ENCODE measurements at regions of chr12 and their contacts with region 1.

Region 1: GRCh38 chr12:110431957-110432587 is 18.1 kb downstream of the ARPC3 start:
- DNase-seq: no peak
- ATAC-seq: no peak
- H3K4me3 ChIP-seq: no peak overlapping the region
- H3K27ac ChIP-seq: no peak overlapping the region
- H3K4me1 ChIP-seq: 0 out of 2 replicates have a peak, but pooled peaks cover 2% of the 10 kb centered on the region
- H3K27me3 ChIP-seq: no peaks in the 10 kb centered on the region
- CTCF ChIP-seq: no peak
- POLR2A ChIP-seq: no peak
- RAD21 ChIP-seq: no peak

Region 2: GRCh38 chr12:110048242-110049027 is 383.6 kb before region 1 on chr12 and contains the start of gene C12orf76:
- CTCF ChIA-PET with region 1: interaction called, 3 read pairs
- POLR2A ChIA-PET with region 1: no interaction called
- dilution Hi-C with region 1: no loop called
- in situ Hi-C with region 1: no loop called
- intact Hi-C with region 1: loop called (anchors 5 kb)
- DNase-seq: peak; percentile 96
- ATAC-seq: peak; percentile 99
- H3K4me3 ChIP-seq: peak within 1 kb of the TSS; percentile 73
- H3K27ac ChIP-seq: peak within 1 kb of the TSS; percentile 66
- H3K4me1 ChIP-seq: peaks cover 5% of the 10 kb centered on the region; the same call in 1 of the 2 replicates
- H3K27me3 ChIP-seq: no peaks in the 10 kb centered on the region
- CTCF ChIP-seq: no peak
- POLR2A ChIP-seq: 0 out of 2 replicates have a peak, but pooled peaks have one; percentile 21
- RAD21 ChIP-seq: no peak; the same call in 1 of the 2 replicates
- total RNA-seq, gene C12orf76: 5.0 and 6.7 TPM in 2 replicates

Region 3: GRCh38 chr12:110176745-110177144 is 255.3 kb before region 1 on chr12:
- CTCF ChIA-PET with region 1: interaction called, 10 read pairs
- POLR2A ChIA-PET with region 1: no interaction called
- dilution Hi-C with region 1: no loop called
- in situ Hi-C with region 1: no loop called
- intact Hi-C with region 1: no loop called
- DNase-seq: peak; percentile 59
- ATAC-seq: no peak
- H3K4me3 ChIP-seq: no peak overlapping the region
- H3K27ac ChIP-seq: no peak overlapping the region
- H3K4me1 ChIP-seq: peaks cover 4% of the 10 kb centered on the region
- H3K27me3 ChIP-seq: no peaks in the 10 kb centered on the region
- CTCF ChIP-seq: no peak
- POLR2A ChIP-seq: no peak
- RAD21 ChIP-seq: no peak

Region 4: DNA sequence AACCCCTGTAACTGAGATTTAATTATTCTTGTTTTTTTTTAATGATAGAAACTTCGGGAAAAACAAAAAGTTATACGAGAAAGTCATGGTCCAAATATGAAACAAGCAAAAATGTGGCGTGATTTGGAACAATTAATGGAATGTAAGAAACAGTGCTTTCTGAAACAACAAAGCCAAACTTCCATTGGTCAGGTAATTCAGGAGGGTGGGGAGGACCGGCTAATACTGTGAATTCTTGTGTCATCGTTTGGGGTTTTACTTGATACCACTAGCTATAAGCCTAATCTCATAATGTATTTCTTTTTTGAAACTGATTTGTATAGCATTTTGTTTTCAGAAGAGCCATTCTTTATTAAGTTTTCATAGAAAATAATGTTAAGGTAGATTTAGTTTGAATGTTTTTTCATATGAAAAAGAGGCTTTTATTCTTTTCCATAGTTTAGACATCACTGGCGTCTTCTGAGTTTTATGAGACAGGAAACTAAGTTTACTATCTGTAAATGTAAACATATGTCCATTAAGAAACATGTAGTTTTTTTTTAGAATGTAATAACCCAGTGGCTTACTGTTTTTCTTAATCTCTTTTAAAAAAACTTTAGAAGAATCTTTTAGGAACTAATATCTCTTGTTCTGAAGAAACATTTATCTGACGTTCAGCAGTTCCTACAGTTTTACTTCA is 213.9 kb before region 1 on chr12:
- CTCF ChIA-PET with region 1: no interaction called
- POLR2A ChIA-PET with region 1: no interaction called
- dilution Hi-C with region 1: no loop called
- in situ Hi-C with region 1: no loop called
- intact Hi-C with region 1: no loop called
- DNase-seq: no peak
- ATAC-seq: no peak
- H3K4me3 ChIP-seq: no peak overlapping the region
- H3K27ac ChIP-seq: peak overlapping the region; percentile 26; the same call in 1 of the 2 replicates
- H3K4me1 ChIP-seq: peaks cover 3% of the 10 kb centered on the region; the same call in 1 of the 2 replicates
- H3K27me3 ChIP-seq: no peaks in the 10 kb centered on the region
- CTCF ChIP-seq: no peak
- POLR2A ChIP-seq: no peak
- RAD21 ChIP-seq: no peak

Region 5: DNA sequence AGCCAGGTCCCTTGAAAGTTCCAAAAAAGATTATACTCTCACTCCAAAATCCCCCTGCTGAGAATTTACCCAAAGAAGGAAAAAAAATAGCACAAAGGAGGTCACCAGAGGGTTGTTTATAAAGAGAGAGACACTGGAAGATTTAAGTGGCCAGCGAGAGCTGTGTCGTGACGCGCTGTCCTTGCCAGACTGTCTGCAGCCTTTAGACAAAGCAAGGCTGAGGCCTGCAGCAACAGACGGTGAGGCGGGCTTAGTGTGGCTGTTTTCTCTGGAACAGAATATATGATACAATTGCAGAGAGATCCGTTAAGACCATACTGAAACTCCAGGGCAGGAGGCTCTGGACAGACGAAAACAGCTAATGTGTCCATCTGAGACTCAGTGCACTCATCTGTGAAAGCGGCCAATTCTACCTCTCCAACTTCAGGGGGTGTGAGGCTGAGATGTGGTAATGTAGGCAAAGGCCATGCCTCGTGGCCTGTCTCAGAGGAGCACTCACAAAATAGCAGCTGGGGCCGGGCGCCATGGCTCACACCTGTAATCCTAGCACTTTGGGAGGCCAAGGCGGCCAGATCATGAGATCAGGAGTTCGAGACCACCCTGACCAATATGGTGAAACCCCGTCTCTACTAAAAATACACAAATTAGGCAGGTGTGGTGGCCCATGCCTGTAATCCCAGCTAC is 64.7 kb before region 1 on chr12:
- CTCF ChIA-PET with region 1: no interaction called
- POLR2A ChIA-PET with region 1: no interaction called
- dilution Hi-C with region 1: no loop called
- in situ Hi-C with region 1: no loop called
- intact Hi-C with region 1: no loop called
- DNase-seq: peak; percentile 40
- ATAC-seq: peak; percentile 67
- H3K4me3 ChIP-seq: no peak overlapping the region
- H3K27ac ChIP-seq: peak overlapping the region; percentile 57
- H3K4me1 ChIP-seq: peaks cover 13% of the 10 kb centered on the region
- H3K27me3 ChIP-seq: no peaks in the 10 kb centered on the region
- CTCF ChIP-seq: no peak
- POLR2A ChIP-seq: no peak
- RAD21 ChIP-seq: no peak